Cardiac septum (tissue), 1 donor: ENCODE measurements at regions of chr21 and their contacts with region 1.

Region 1: GRCh38 chr21:39531832-39532231 is 80.1 kb downstream of the SH3BGR start:
- DNase-seq: no peak

Region 2: DNA sequence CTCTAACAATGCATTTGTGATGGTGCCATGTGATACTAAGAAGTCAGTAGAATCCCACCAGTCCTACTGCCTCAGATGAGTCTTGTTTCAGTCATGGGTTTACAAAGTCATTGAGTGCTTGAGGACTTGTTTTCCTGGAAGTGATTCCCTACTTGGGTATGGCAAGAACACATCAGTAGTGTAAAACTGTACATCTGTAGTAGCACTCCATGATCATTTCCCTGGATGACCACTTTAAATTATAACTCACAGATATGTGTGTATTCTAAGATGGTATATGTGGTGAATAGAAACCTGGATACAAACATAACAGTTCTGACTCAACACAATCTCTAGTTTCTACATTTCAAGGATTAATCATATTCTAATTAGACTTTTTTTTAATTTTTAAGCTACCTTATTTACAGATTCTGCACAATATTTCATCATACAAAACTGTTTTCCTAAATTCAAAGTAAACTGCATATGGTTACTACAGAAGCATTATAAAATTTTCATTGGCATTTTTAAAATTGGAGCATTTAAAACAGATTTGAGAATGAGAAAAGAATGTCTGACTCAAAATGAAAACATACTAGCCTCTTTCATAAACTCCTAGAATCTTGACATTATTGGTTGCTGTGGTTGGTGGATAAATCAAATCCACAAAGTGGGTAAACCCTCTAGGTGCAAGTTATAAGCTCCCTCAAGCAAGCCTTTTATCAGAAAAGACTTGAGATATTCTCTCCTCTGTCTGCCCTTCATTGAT is 341.8 kb before region 1 on chr21:
- intact Hi-C with region 1: no loop called
- DNase-seq: no peak

Region 3: GRCh38 chr21:39612233-39613040 is 80.6 kb after region 1 on chr21 and contains the start of gene B3GALT5:
- intact Hi-C with region 1: loop called (anchors 10 kb)
- DNase-seq: no peak
- total RNA-seq, gene B3GALT5: 0.65 TPM